ENCODE measurements at regions of chr5 and their contacts with region 1.

Region 1: GRCh38 chr5:149561848-149562247 is 10.6 kb upstream of the CSNK1A1 start:
- DNase-seq: no peak
- H3K4me3 Mint-ChIP-seq: no peak overlapping the region
- H3K27ac Mint-ChIP-seq: peak overlapping the region; percentile 17
- H3K4me1 Mint-ChIP-seq: peaks cover 20% of the 10 kb centered on the region
- H3K27me3 Mint-ChIP-seq: no peaks in the 10 kb centered on the region

Region 2: GRCh38 chr5:149141224-149141956 is 420.5 kb before region 1 on chr5 and contains the start of gene ABLIM3:
- intact Hi-C with region 1: loop called (anchors 5 kb)
- DNase-seq: peak; percentile 93
- H3K4me3 Mint-ChIP-seq: peak within 1 kb of the TSS; percentile 63
- H3K27ac Mint-ChIP-seq: no peak within 1 kb of the TSS
- H3K4me1 Mint-ChIP-seq: peaks cover 2% of the 10 kb centered on the region
- H3K27me3 Mint-ChIP-seq: peaks cover 39% of the 10 kb centered on the region
- total RNA-seq, gene ABLIM3: not detected in 2 replicates

Region 3: GRCh38 chr5:149317281-149318048 is 244.4 kb before region 1 on chr5:
- intact Hi-C with region 1: loop called (anchors 5 kb)
- DNase-seq: peak; percentile 80
- H3K4me3 Mint-ChIP-seq: no peak overlapping the region
- H3K27ac Mint-ChIP-seq: no peak overlapping the region
- H3K4me1 Mint-ChIP-seq: no peaks in the 10 kb centered on the region
- H3K27me3 Mint-ChIP-seq: no peaks in the 10 kb centered on the region

Region 4: DNA sequence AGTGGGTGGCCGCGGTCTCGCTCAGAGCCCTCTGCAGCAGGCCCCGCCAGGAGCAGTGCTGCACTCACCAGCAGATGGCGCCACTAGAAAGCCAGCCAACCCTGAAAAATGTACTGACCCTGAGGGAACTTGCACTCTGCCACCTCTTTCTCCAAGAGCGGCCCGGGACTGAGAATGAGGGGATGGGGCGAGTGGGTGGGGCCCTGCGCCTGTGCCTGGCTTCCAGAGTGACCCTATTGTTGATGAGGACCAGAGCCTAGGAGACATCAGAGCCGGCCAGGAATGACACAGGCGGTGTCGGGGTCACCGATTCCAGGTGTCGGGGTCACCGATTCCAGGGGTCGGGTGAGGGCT is 179.9 kb before region 1 on chr5:
- intact Hi-C with region 1: loop called (anchors 1 kb)
- DNase-seq: peak; percentile 92
- H3K4me3 Mint-ChIP-seq: no peak overlapping the region
- H3K27ac Mint-ChIP-seq: no peak overlapping the region
- H3K4me1 Mint-ChIP-seq: no peaks in the 10 kb centered on the region
- H3K27me3 Mint-ChIP-seq: no peaks in the 10 kb centered on the region

Region 5: GRCh38 chr5:149434162-149435014 is 127.5 kb before region 1 on chr5:
- intact Hi-C with region 1: loop called (anchors 1 kb)
- DNase-seq: peak; percentile 85
- H3K4me3 Mint-ChIP-seq: no peak overlapping the region
- H3K27ac Mint-ChIP-seq: no peak overlapping the region
- H3K4me1 Mint-ChIP-seq: peaks cover 17% of the 10 kb centered on the region
- H3K27me3 Mint-ChIP-seq: peaks cover 4% of the 10 kb centered on the region

Region 6: DNA sequence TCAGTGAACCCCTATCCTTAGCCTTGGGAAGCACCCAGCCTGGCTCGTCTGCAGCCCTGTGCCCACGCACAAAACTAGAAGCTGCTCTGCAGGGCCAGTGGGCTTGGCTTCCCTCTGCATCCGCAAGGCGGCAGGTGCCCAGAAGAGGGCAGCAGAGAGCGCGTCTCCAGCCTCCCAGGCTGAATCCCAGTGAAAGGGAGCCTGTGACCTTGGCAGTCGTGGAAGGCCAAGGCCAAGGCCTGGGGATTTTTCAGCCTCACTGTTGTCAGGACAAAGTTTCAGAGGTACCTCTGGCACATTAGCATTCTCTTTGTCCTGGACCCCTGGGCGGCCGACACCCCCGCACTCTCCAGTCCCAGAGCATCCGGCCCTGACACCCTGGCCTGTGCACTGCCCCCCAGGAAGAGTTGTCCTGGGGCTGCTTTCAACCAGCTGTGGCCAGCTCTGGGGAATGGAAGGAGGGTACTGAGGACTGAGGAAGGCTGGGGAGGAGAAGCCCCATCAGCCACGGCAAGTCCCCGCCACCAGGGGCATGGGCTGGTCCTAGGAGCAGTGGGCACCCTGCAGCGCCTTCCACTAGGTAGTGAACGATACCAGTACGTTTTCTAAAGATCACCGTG is 119.2 kb before region 1 on chr5:
- intact Hi-C with region 1: loop called (anchors 1 kb)
- DNase-seq: peak; percentile 92
- H3K4me3 Mint-ChIP-seq: no peak overlapping the region
- H3K27ac Mint-ChIP-seq: peak overlapping the region; percentile 32
- H3K4me1 Mint-ChIP-seq: peaks cover 23% of the 10 kb centered on the region
- H3K27me3 Mint-ChIP-seq: no peaks in the 10 kb centered on the region

Region 7: GRCh38 chr5:149517461-149518122 is 44.3 kb before region 1 on chr5:
- intact Hi-C with region 1: loop called (anchors 5 kb)
- DNase-seq: no peak
- H3K4me3 Mint-ChIP-seq: no peak overlapping the region
- H3K27ac Mint-ChIP-seq: no peak overlapping the region
- H3K4me1 Mint-ChIP-seq: peaks cover 32% of the 10 kb centered on the region
- H3K27me3 Mint-ChIP-seq: no peaks in the 10 kb centered on the region